Common myeloid progenitor, CD34-positive (primary cell): ENCODE measurements at regions of chr5 and their contacts with region 1.

Region 1: GRCh38 chr5:157253547-157253946 is 12.4 kb upstream of the CYFIP2 start:
- DNase-seq: peak in 1 of 3 donors; percentile 46
- H3K4me3 ChIP-seq: peak overlapping the region in 2 of 7 experiments; percentile 28 to 43
- H3K27ac ChIP-seq: no peak overlapping the region
- H3K4me1 ChIP-seq: peaks cover 12 to 43% (median 35%) of the 10 kb centered on the region in 4 experiments
- H3K27me3 ChIP-seq: no peaks in the 10 kb centered on the region

Region 2: DNA sequence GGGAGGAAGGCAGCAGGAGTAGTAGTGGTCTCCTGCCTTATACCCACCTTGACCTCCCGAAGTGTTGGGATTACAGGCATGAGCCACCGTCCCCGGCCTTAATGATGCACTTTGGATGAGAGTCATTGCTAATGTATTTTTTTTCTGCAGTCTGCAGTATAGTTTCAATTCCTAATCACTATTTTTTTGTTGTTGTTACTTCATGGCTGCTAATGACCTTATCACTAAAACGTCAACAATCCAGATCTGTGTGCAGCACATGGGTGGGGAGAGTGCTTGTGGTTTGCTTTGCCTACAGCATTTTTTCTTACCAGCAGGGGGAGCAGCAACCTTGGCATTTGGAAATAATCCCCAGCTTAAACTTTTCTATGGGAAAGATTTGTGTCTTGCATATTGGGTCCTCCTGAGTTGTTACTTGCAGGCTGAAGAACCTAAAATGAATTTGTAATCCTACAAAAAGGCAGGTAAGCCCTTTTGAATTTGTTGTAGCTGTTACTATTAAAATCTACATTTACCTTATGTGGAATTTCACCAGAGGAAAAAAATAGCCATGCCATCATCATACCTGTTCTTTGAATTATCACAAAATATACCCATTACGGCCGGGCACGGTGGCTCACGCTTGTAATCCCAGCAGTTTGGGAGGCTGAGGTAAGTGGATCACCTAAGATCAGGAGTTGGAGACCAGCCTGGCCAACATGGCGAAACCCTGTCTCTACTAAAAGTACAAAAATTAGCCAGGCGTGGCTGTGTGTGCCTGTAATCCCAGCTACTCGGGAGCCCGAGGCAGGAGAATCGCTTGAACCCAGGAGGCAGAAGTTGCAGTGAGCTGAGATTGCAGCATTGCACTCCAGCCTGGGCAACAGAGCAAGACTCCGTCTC is 104.6 kb before region 1 on chr5:
- CTCF ChIA-PET with region 1: interaction called, 20 read pairs
- POLR2A ChIA-PET with region 1: no interaction called
- DNase-seq: peak; percentile 78 to 89 (median 84)
- H3K4me3 ChIP-seq: no peak overlapping the region
- H3K27ac ChIP-seq: no peak overlapping the region
- H3K4me1 ChIP-seq: peaks cover 0 to 3% (median under 1%) of the 10 kb centered on the region in 4 experiments
- H3K27me3 ChIP-seq: no peaks in the 10 kb centered on the region

Region 3: DNA sequence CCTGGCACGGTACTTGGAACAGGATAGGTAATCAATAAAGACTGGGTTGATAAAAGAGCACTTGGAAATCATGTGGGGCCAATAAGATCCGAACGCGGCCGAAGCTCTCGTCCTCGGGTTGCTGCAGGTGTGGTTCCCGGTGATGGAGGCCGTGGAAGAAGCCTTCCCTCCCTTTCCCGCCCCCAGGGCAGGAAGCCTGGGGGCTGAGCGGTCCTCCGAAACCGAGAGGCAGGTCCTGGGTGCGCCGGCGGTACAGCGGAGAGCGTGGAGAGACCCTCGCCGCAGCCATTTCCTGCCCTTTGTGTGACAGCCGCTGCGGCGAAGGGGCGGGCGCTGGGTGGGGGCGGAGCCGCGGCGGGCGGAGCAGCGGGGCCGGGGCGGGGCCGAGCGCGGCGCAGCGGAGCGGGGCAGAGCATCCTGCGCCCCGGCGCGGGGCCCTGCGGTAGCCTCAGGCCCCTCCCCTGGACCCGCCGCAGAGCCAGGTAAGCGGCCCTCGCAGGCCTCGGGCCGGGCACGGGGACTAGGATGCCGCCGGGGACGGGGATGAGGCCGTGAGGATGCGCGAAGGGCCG is 12.3 kb after region 1 on chr5 and contains the start of gene CYFIP2:
- CTCF ChIA-PET with region 1: interaction called, 74 read pairs
- POLR2A ChIA-PET with region 1: interaction called, 5 read pairs
- DNase-seq: peak; percentile 59 to 88 (median 85)
- H3K4me3 ChIP-seq: peak within 1 kb of the TSS; percentile 27 to 86 (median 75)
- H3K27ac ChIP-seq: peak within 1 kb of the TSS; percentile 56 to 78
- H3K4me1 ChIP-seq: peaks cover 27 to 74% (median 56%) of the 10 kb centered on the region in 4 experiments
- H3K27me3 ChIP-seq: no peaks in the 10 kb centered on the region

Region 4: GRCh38 chr5:157271740-157272271 is 18.3 kb after region 1 on chr5:
- CTCF ChIA-PET with region 1: interaction called, 74 read pairs
- POLR2A ChIA-PET with region 1: interaction called, 5 read pairs
- DNase-seq: peak; percentile 95 to 100 (median 100)
- H3K4me3 ChIP-seq: peak overlapping the region in 3 of 7 experiments; percentile 2 to 36 (median 20)
- H3K27ac ChIP-seq: peak overlapping the region; percentile 84 to 86
- H3K4me1 ChIP-seq: peaks cover 38 to 69% (median 67%) of the 10 kb centered on the region in 4 experiments
- H3K27me3 ChIP-seq: no peaks in the 10 kb centered on the region

Region 5: GRCh38 chr5:157290981-157291711 is 37.6 kb after region 1 on chr5:
- CTCF ChIA-PET with region 1: interaction called, 15 read pairs
- POLR2A ChIA-PET with region 1: no interaction called
- DNase-seq: peak in 2 of 3 donors; percentile 67 to 78
- H3K4me3 ChIP-seq: no peak overlapping the region
- H3K27ac ChIP-seq: no peak overlapping the region
- H3K4me1 ChIP-seq: no peaks in the 10 kb centered on the region
- H3K27me3 ChIP-seq: no peaks in the 10 kb centered on the region

Region 6: DNA sequence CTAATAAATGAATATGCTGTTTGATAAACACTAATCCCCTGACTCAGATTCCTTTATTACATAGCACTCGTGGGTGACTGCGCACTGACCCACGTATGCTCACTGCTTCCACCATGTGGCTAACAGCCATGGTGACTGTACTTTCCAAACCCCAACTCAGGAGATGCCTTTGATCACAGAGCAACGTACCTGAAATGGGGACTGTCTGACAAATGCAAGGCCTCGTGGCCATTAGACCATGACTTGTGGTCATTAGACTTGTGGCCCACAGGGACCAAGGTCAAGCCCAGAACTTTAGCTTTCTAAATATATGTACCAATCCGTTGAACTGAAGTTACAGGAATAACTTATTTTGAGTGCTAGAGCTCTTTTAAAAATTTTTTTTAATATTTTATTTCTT is 58.9 kb after region 1 on chr5:
- CTCF ChIA-PET with region 1: interaction called, 109 read pairs
- POLR2A ChIA-PET with region 1: interaction called, 5 read pairs
- DNase-seq: peak; percentile 65 to 87 (median 84)
- H3K4me3 ChIP-seq: no peak overlapping the region
- H3K27ac ChIP-seq: no peak overlapping the region
- H3K4me1 ChIP-seq: no peaks in the 10 kb centered on the region
- H3K27me3 ChIP-seq: no peaks in the 10 kb centered on the region